ENCODE measurements at regions of chr22 and their contacts with region 1.

Region 1: GRCh38 chr22:17281440-17281841 is 62.2 kb upstream of the ADA2 start:
- DNase-seq: peak; percentile 34
- H3K4me3 Mint-ChIP-seq: peak overlapping the region; percentile 27
- H3K27ac Mint-ChIP-seq: peak overlapping the region; percentile 81
- H3K4me1 Mint-ChIP-seq: peaks cover 16% of the 10 kb centered on the region
- H3K27me3 Mint-ChIP-seq: no peaks in the 10 kb centered on the region

Region 2: GRCh38 chr22:17258015-17258787 is 23.2 kb before region 1 on chr22:
- CTCF ChIA-PET with region 1: no interaction called
- POLR2A ChIA-PET with region 1: no interaction called
- intact Hi-C with region 1: loop called (anchors 1 kb)
- DNase-seq: peak; percentile 84
- H3K4me3 Mint-ChIP-seq: no peak overlapping the region
- H3K27ac Mint-ChIP-seq: peak overlapping the region; percentile 45
- H3K4me1 Mint-ChIP-seq: peaks cover 19% of the 10 kb centered on the region
- H3K27me3 Mint-ChIP-seq: no peaks in the 10 kb centered on the region

Region 3: DNA sequence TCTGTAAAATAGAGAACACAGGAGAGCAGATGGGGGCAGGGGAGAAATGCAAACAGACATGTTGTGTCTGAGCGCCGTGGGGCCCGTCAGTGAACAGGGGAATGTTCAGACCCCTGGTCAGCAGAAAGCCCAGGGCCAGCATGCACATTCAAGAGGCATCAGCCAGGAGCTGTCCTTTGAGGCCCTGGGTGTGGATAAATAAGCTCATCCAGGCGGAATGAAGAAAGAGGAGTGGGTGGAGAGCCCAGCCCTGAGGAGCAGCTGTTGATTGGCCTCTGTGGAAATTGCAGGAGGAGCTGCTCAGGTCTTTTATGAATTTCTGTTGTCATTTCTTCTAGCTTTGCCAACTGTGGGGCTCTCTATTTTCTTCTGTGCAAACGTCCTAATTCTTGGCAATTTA is 38.1 kb after region 1 on chr22:
- CTCF ChIA-PET with region 1: no interaction called
- POLR2A ChIA-PET with region 1: no interaction called
- intact Hi-C with region 1: loop called (anchors 5 kb)
- DNase-seq: no peak
- H3K4me3 Mint-ChIP-seq: no peak overlapping the region
- H3K27ac Mint-ChIP-seq: no peak overlapping the region
- H3K4me1 Mint-ChIP-seq: no peaks in the 10 kb centered on the region
- H3K27me3 Mint-ChIP-seq: no peaks in the 10 kb centered on the region